ENCODE measurements at regions of chr1 and their contacts with region 1.

Region 1: GRCh38 chr1:227787513-227788270 is 27.8 kb upstream of the PRSS38 start:
- H3K4me3 Mint-ChIP-seq: peak overlapping the region; percentile 79
- H3K27ac Mint-ChIP-seq: peak overlapping the region; percentile 69
- H3K4me1 Mint-ChIP-seq: peaks cover 28% of the 10 kb centered on the region
- H3K27me3 Mint-ChIP-seq: peaks cover 54% of the 10 kb centered on the region

Region 2: DNA sequence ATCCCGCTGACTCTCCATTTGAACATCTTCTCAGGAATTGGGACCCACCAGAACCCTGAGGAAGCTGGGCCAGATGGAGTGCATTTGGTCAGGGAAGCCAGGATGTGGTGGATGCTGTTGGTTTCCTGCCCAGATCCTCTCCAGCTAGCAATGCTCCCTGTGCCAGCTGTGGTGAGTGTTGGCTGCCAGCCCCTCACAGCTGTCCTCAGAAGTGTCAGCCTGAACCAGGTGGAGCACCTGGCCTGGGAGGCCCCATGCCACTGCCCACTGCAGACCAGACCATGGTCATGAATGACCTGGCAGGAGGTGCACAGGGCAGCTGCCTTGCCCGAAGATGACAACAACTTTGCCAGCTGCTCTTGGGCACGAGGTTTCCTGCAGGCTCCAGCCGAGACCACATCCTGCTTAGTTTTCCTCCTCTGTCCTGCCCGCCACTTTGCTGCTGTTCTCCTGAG is 82.2 kb after region 1 on chr1:
- intact Hi-C with region 1: no loop called
- H3K4me3 Mint-ChIP-seq: no peak overlapping the region
- H3K27ac Mint-ChIP-seq: no peak overlapping the region
- H3K4me1 Mint-ChIP-seq: no peaks in the 10 kb centered on the region
- H3K27me3 Mint-ChIP-seq: peaks cover 1% of the 10 kb centered on the region

Region 3: GRCh38 chr1:227886993-227887696 is 99.5 kb after region 1 on chr1:
- intact Hi-C with region 1: loop called (anchors 2 kb)
- H3K4me3 Mint-ChIP-seq: peak overlapping the region; percentile 70
- H3K27ac Mint-ChIP-seq: peak overlapping the region; percentile 16
- H3K4me1 Mint-ChIP-seq: peaks cover 12% of the 10 kb centered on the region
- H3K27me3 Mint-ChIP-seq: peaks cover 4% of the 10 kb centered on the region

Measured in dendritic cell treated with granulocyte-macrophage colony-stimulating factor and Interleukin-4, amounts not matched to agents 40 ng/mL and 50 ng/mL, for 4 days (primary cell).